Transverse colon (tissue), 4 donors: ENCODE measurements at regions of chr12 and their contacts with region 1.

Region 1: GRCh38 chr12:109477185-109477962 is at the starts of genes KCTD10 and UBE3B:
- DNase-seq: peak; percentile 92
- H3K4me3 ChIP-seq: peak within 1 kb of the TSS; percentile 60 to 88 (median 77)
- H3K27ac ChIP-seq: peak within 1 kb of the TSS; percentile 88 to 96 (median 95)
- H3K4me1 ChIP-seq: peaks cover 10 to 39% (median 30%) of the 10 kb centered on the region in 4 donors
- H3K27me3 ChIP-seq: no peaks in the 10 kb centered on the region
- CTCF ChIP-seq: peak in 4 of 5 experiments; percentile 9 to 64 (median 31)
- EP300 ChIP-seq: peak; percentile 47
- POLR2A ChIP-seq: peak; percentile 81
- total RNA-seq, gene KCTD10: 67.2 to 126 (median 79.5) TPM
- total RNA-seq, gene UBE3B: 34.4 to 73.0 (median 71.6) TPM

Region 2: DNA sequence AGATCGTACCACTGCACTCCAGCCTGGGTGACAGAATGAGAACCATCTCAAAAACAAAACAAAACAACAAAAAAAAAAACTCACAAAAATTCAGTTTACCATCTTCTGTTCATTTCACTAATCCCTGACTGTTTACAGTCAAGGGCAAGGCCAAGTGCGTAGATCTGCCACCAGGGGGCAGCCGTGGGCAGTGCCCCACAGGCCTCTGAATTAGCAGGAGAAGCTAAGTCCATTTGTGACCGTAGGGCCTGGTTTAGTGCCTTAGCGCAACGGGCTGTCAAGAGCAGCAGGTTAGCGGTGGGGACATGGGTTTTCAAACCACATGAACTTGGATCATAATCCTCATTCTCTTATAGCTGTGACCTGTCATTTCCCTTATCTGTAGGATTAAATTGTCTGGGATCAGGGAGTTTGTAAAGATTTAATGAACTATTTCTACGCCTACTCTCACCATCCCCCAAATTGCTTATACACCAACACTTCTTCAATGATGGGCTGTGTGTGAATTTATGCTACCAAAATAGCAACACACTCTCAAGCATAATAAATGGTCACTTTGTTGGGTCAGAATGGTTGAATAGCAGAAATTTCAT is 49.2 kb before region 1 on chr12:
- in situ Hi-C with region 1: no loop called
- intact Hi-C with region 1: loop called (anchors 5 kb)
- DNase-seq: peak; percentile 88
- H3K4me3 ChIP-seq: no peak overlapping the region
- H3K27ac ChIP-seq: no peak overlapping the region
- H3K4me1 ChIP-seq: peaks cover 3 to 5% (median 3%) of the 10 kb centered on the region in 4 donors
- H3K27me3 ChIP-seq: no peaks in the 10 kb centered on the region
- CTCF ChIP-seq: peak; percentile 90 to 99 (median 97)
- EP300 ChIP-seq: no peak
- POLR2A ChIP-seq: no peak